Activated CD8-positive, alpha-beta memory T cell treated with anti-CD3 and anti-CD28 coated beads, Interleukin-2, amount 10 ng/mL, durations not matched to agents 7 days and 5 days (primary cell): ENCODE measurements at regions of chr9 and their contacts with region 1.

Region 1: DNA sequence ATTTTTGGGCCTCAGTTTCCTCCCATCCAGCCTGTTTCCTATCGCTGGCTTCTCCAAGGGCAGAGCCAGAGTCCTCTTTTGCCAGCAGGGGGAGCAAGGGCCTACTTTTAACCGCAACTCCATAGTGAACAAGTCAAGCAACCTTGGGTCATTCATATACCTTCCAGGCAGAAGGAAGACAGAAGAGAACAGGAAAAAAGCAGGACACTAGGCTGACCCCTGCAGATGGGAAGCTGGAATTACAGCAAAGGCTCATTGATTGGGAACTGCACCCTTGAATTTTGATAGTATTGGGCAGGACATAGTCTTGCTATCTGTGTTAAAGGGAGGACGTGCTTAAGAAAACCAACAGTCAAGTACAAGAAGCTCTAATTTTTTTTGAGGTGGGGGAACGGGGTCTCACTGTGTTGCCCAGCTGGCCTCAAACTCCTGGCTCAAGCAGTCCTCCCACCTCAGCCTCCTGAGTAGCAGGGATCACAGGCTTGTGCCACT is 30.1 kb downstream of the QRFP start:
- DNase-seq: peak; percentile 67
- ATAC-seq: peak; percentile 77
- H3K4me3 Mint-ChIP-seq: no peak overlapping the region
- H3K27ac Mint-ChIP-seq: no peak overlapping the region
- H3K4me1 Mint-ChIP-seq: no peaks in the 10 kb centered on the region
- H3K27me3 Mint-ChIP-seq: no peaks in the 10 kb centered on the region

Region 2: DNA sequence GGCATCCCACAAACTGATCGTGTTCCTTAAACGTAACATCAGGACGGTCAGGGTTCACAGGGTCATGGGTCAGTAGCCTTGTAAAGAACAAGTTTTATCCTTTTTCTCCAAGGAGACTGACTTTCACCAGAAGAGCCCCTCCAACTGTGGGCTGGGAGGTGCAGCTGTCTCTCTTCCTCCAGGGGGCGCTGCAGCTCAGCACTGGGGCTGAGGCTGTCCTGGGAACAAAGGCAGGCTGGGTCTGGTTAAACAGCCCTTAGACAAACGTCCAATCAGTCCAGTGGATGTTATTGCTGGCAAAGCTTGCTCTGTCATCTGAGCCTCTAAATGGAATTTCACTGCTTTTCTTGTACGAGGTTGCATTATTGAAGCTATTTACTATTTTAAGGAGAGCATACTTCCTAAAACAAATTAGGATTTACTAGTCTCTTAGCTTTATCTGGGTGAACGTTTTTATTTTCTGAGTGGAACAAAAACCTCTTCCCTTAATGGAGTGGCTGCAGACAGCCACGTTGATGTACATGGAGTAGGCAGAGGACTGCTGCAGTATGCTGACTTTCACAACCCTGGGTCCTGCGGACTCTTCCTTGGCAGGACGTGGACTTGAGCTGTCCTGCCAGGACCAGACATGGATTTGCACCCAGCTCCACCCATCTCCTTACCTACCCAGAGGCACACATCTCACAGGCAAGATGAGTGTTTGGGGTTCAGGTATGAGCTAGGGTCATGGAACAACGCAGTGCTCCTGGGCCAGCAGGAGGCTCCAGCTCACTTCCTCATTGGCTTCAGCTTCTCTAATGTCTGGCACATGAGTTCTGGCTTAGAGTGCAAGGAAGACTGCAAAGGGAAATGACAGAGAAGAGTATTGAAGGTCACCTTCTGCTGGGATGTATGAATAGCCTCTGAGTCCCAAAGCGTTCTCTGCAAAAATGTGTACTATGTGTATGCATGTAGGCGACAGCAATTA is 165.2 kb before region 1 on chr9:
- CTCF ChIA-PET with region 1: interaction called, 16 read pairs
- DNase-seq: peak; percentile 73
- ATAC-seq: peak; percentile 85
- H3K4me3 Mint-ChIP-seq: no peak overlapping the region
- H3K27ac Mint-ChIP-seq: peak overlapping the region; percentile 22
- H3K4me1 Mint-ChIP-seq: peaks cover 27% of the 10 kb centered on the region
- H3K27me3 Mint-ChIP-seq: no peaks in the 10 kb centered on the region

Region 3: GRCh38 chr9:130707225-130707976 is 159.1 kb before region 1 on chr9:
- CTCF ChIA-PET with region 1: interaction called, 16 read pairs
- DNase-seq: peak; percentile 77
- ATAC-seq: peak; percentile 41
- H3K4me3 Mint-ChIP-seq: no peak overlapping the region
- H3K27ac Mint-ChIP-seq: no peak overlapping the region
- H3K4me1 Mint-ChIP-seq: peaks cover 6% of the 10 kb centered on the region
- H3K27me3 Mint-ChIP-seq: no peaks in the 10 kb centered on the region

Region 4: DNA sequence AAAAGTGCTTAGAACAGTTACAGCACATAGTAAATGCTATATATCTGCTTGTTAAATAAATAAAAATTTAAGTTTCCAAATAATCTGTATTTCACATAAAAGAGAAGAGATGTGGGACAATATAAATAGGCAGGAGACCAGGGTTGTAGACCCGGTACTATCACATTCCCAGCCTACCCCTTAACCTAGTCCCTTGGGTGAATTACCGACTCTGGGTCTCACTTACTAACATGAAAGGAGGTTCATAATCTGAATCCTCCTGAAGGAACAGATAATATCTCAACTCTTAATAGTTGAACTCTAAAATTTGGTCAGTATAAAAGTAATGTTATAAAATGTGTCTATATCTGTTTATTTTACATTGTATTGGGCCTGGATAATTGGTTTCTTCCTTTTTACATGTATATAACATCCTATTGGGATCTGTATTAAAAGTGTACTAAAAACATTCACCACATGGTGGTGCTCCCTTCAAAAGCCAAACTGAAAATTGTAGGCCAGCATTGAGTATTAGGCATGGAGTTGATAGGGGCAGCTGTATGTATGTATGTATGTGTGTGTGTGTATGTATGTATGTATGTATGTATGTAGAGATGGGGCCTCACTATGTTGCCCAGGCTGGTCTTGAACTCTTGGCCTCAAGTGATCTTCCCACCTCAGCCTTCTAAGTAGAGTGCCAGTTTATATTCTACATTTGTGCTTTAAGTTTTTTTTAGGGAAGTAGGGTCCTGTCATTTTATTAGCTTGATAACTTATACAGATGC is 95.7 kb before region 1 on chr9:
- CTCF ChIA-PET with region 1: interaction called, 30 read pairs
- DNase-seq: no peak
- ATAC-seq: peak; percentile 73
- H3K4me3 Mint-ChIP-seq: no peak overlapping the region
- H3K27ac Mint-ChIP-seq: no peak overlapping the region
- H3K4me1 Mint-ChIP-seq: peaks cover 24% of the 10 kb centered on the region
- H3K27me3 Mint-ChIP-seq: no peaks in the 10 kb centered on the region

Region 5: DNA sequence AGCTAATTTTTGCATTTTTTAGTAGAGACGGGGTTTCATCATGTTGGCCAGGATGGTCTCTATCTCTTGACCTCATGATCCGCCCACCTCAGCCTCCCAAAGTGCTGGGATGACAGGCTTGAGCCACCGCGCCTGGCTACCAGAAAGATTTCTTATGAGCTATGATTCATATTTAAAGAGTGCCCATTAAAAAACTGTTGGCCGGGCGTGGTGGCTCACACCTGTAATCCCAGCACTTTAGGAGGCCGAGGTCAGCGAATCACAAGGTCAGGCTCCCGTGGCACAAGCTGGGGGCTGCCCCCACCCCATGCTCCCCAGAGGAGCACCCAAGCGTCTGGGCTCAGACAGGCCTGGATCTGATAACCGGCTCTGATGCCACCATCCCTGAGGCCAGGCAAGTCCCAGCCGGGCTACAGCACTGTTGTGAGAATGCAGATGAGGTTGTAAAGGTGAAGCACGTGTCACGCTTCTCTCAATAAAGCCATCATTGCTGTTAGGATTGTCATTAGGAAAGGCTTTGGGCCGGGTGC is 16.2 kb after region 1 on chr9:
- CTCF ChIA-PET with region 1: no interaction called
- DNase-seq: no peak
- ATAC-seq: no peak
- H3K4me3 Mint-ChIP-seq: no peak overlapping the region
- H3K27ac Mint-ChIP-seq: no peak overlapping the region
- H3K4me1 Mint-ChIP-seq: no peaks in the 10 kb centered on the region
- H3K27me3 Mint-ChIP-seq: no peaks in the 10 kb centered on the region

Region 6: GRCh38 chr9:130895481-130896232 is 29.1 kb after region 1 on chr9:
- CTCF ChIA-PET with region 1: no interaction called
- DNase-seq: no peak
- ATAC-seq: no peak
- H3K4me3 Mint-ChIP-seq: no peak overlapping the region
- H3K27ac Mint-ChIP-seq: no peak overlapping the region
- H3K4me1 Mint-ChIP-seq: no peaks in the 10 kb centered on the region
- H3K27me3 Mint-ChIP-seq: no peaks in the 10 kb centered on the region

Region 7: DNA sequence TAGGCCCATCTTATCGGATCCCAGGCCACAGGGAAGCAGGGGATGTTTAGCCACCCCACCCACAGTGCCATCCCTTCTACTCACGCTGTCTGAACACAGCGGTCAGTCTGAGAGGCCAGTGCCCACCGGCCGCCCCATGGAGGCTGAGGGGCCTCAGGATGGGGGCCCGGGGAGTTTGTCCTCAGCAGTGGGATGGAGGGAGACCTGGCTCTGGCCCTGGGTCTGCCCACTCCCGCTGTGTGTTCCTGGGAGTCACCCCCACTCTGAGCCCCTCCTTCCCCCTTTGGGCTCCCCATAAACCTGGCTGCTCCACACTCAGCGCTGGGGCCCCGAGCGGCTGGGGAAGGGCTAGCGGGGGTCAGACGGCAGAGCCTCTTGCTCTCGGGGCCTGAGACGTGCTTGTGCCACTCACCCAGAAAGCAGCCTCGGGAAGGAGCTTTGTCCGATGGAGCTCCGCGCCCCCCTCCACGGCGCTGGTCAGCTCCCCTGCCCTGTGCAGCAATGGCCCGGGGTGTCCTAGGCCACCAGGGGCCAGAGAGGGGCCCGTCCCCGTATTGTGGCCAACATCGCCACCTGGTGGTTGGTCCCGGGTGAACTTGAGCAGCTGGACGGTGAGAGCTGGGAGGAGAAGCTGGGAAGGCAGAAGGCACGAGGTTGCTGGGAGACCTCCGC is 131.5 kb after region 1 on chr9:
- CTCF ChIA-PET with region 1: interaction called, 10 read pairs
- DNase-seq: peak; percentile 62
- ATAC-seq: peak; percentile 72
- H3K4me3 Mint-ChIP-seq: no peak overlapping the region
- H3K27ac Mint-ChIP-seq: no peak overlapping the region
- H3K4me1 Mint-ChIP-seq: no peaks in the 10 kb centered on the region
- H3K27me3 Mint-ChIP-seq: peaks cover 12% of the 10 kb centered on the region

Region 8: GRCh38 chr9:131046581-131047202 is 180.2 kb after region 1 on chr9:
- CTCF ChIA-PET with region 1: interaction called, 44 read pairs
- DNase-seq: peak; percentile 76
- ATAC-seq: peak; percentile 93
- H3K4me3 Mint-ChIP-seq: no peak overlapping the region
- H3K27ac Mint-ChIP-seq: no peak overlapping the region
- H3K4me1 Mint-ChIP-seq: peaks cover 2% of the 10 kb centered on the region
- H3K27me3 Mint-ChIP-seq: peaks cover 4% of the 10 kb centered on the region